Activated T-helper 2 cell treated with anti-CD3 and anti-CD28 coated beads, Interferon-gamma antibody, Interleukin-2, Interleukin-4, amounts not matched to agents 10 μg/mL and 5 μg/mL and 100 μg/mL, durations not matched to agents 14 hours and 24 hours and 36 hours (primary cell): ENCODE measurements at regions of chr7 and their contacts with region 1.

Region 1: DNA sequence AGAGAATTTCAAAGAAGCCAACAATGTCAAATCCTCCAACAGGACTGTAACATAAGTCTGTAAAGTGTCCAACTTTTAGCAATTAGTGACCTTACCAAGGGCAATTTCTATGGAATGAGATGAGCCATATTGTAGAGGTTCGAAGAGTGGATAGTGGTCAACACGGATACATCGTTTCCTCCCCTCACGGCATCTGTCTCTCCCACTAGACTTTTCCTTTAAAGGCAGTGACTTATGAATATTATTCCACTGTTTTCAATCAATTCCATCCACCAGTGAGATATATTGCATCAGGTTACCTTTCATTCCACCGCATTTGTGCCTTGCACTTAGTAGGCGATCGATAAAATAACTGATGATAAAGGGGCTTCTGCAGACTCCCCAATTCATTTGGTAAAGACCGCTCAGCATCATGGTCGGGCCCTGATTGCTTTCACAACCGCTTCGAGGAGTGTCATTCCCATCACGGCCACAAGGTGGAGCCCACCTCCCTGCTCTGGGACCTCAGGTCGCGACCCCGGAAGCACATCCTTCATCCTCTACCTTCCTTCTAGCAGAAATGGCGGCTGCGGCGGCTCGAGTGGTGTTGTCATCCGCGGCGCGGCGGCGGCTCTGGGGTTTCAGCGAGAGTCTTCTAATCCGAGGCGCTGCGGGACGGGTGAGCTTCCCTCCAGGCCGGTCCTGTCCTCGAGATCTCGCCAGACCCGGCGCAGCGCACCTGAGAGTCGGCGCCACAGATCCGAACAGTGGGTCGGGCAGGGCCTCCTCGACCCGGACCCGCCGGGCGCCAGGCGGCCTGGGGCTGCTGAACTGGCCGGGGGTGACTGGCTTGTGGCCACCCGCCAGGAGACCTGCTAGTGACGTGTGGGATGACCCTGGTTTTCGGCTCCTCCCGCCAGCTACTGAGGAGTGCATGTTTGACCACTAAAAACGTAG is at the start of gene PMPCB:
- DNase-seq: peak; percentile 92
- H3K4me3 Mint-ChIP-seq: peak within 1 kb of the TSS; percentile 99
- H3K27ac Mint-ChIP-seq: peak within 1 kb of the TSS; percentile 92
- H3K4me1 Mint-ChIP-seq: peaks cover 23% of the 10 kb centered on the region
- H3K27me3 Mint-ChIP-seq: peaks cover 6% of the 10 kb centered on the region
- total RNA-seq, gene PMPCB: 69.2 and 71.5 TPM in 2 replicates

Region 2: GRCh38 chr7:103412151-103412550 is 115.0 kb after region 1 on chr7:
- intact Hi-C with region 1: loop called (anchors 2 kb)
- DNase-seq: no peak
- H3K4me3 Mint-ChIP-seq: no peak overlapping the region
- H3K27ac Mint-ChIP-seq: no peak overlapping the region
- H3K4me1 Mint-ChIP-seq: no peaks in the 10 kb centered on the region
- H3K27me3 Mint-ChIP-seq: peaks cover 14% of the 10 kb centered on the region

Region 3: GRCh38 chr7:103462358-103462757 is 165.2 kb after region 1 on chr7:
- intact Hi-C with region 1: no loop called
- DNase-seq: no peak
- H3K4me3 Mint-ChIP-seq: no peak overlapping the region
- H3K27ac Mint-ChIP-seq: no peak overlapping the region
- H3K4me1 Mint-ChIP-seq: no peaks in the 10 kb centered on the region
- H3K27me3 Mint-ChIP-seq: peaks cover 4% of the 10 kb centered on the region